ENCODE measurements at regions of chr10 and their contacts with region 1.

Region 1: GRCh38 chr10:70733051-70733450 is 52.1 kb downstream of the TBATA start:
- DNase-seq: no peak
- ATAC-seq: no peak
- H3K4me3 ChIP-seq: no peak overlapping the region
- H3K27ac ChIP-seq: no peak overlapping the region
- H3K4me1 ChIP-seq: peaks cover 2 to 18% of the 10 kb centered on the region in 2 experiments; a peak in 3 of 5 replicates
- H3K27me3 ChIP-seq: no peaks in the 10 kb centered on the region
- CTCF ChIP-seq: no peak
- EP300 ChIP-seq: no peak
- POLR2A ChIP-seq: no peak
- RAD21 ChIP-seq: no peak

Region 2: GRCh38 chr10:70715853-70716795 is 16.9 kb before region 1 on chr10:
- CTCF ChIA-PET with region 1: no interaction called
- POLR2A ChIA-PET with region 1: interaction called, 12 read pairs
- in situ Hi-C with region 1: no loop called
- intact Hi-C with region 1: no loop called
- DNase-seq: peak; percentile 84 to 96 (median 93)
- ATAC-seq: peak; percentile 89
- H3K4me3 ChIP-seq: no peak overlapping the region
- H3K27ac ChIP-seq: peak overlapping the region; percentile 72
- H3K4me1 ChIP-seq: peaks cover 22 to 24% of the 10 kb centered on the region in 2 experiments
- H3K27me3 ChIP-seq: no peaks in the 10 kb centered on the region
- CTCF ChIP-seq: no peak
- EP300 ChIP-seq: peak; percentile 58; the same call in 1 of the 2 replicates
- POLR2A ChIP-seq: no peak
- RAD21 ChIP-seq: no peak; a peak in 1 of 4 replicates